Lower leg skin (tissue), 4 donors: ENCODE measurements at regions of chr17 and their contacts with region 1.

Region 1: DNA sequence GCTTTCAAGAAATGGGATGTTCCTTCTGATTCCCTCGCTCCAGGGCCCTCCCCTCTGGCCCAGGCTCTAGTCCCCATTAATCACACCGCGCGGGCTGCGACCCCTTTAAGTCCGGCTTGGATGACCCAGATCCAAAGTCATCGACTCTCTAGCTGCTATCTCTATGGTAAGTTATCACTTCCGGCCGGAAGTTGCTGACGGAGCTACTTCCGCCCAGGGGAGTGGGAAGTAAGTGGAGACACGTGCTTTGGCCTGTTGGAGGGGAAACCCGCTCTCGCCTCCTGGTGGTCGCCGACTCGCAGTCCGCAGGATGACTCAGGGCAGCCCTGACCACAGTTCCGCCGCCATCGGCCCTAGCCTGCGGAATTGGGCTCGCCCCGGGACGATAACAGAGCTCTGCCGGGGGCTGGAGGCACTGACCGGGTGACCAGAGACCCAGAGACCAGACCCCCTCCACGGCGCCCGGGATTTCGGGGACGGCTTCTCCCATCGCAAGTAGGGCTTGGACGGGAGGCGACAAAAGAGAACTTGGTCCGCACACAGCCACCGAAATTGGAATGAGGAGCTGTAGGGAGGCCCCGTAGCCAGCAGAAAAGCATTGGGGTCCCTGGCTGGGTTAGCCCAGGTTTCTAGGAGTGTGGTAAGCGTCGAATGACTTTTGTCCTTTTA is 52.2 kb upstream of the SEC14L1 start:
- DNase-seq: peak; percentile 95 to 98
- H3K4me3 ChIP-seq: peak overlapping the region; percentile 82
- CTCF ChIP-seq: peak in 1 of 3 donors; percentile 62
- POLR2A ChIP-seq: no peak

Region 2: GRCh38 chr17:76994237-76994637 is 94.4 kb before region 1 on chr17:
- intact Hi-C with region 1: no loop called
- DNase-seq: no peak
- H3K4me3 ChIP-seq: no peak overlapping the region
- CTCF ChIP-seq: no peak
- POLR2A ChIP-seq: no peak

Region 3: GRCh38 chr17:77247048-77247541 is 158.5 kb after region 1 on chr17:
- intact Hi-C with region 1: loop called (anchors 2 kb)
- DNase-seq: peak; percentile 63 to 96
- H3K4me3 ChIP-seq: no peak overlapping the region
- CTCF ChIP-seq: peak in 1 of 3 donors; percentile 88
- POLR2A ChIP-seq: no peak

Region 4: GRCh38 chr17:77581480-77581879 is 492.9 kb after region 1 on chr17:
- intact Hi-C with region 1: loop called (anchors 5 kb)
- DNase-seq: peak in 1 of 2 donors; percentile 45
- H3K4me3 ChIP-seq: no peak overlapping the region
- CTCF ChIP-seq: no peak
- POLR2A ChIP-seq: no peak